Activated CD4-positive, alpha-beta T cell treated with anti-CD3 and anti-CD28 coated beads, Interleukin-2, amount 10 ng/mL, durations not matched to agents 24 days and 14 days (primary cell): ENCODE measurements at regions of chr19 and their contacts with region 1.

Region 1: DNA sequence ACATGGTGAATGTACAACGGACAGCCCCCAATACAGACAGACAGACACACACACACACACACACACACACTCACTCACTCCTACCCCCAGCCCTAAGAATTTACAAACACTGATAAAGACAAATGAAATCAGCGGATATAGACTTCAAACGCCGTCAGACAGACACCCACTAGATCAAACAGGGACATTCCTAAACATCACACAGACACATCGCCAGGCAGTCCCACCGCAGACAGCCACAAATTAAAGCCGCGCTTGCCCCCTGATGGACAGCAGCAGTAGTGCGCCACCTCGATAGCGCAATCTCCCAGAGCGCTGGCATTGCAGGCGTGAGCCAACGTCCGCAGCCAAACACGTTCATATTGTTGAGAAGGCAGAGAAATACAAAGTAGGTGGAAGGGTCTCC is 24.7 kb upstream of the ADGRE1 start:
- DNase-seq: peak; percentile 97
- H3K4me3 Mint-ChIP-seq: peak overlapping the region; percentile 84
- H3K27ac Mint-ChIP-seq: peak overlapping the region; percentile 68
- H3K4me1 Mint-ChIP-seq: peaks cover 17% of the 10 kb centered on the region
- H3K27me3 Mint-ChIP-seq: no peaks in the 10 kb centered on the region

Region 2: DNA sequence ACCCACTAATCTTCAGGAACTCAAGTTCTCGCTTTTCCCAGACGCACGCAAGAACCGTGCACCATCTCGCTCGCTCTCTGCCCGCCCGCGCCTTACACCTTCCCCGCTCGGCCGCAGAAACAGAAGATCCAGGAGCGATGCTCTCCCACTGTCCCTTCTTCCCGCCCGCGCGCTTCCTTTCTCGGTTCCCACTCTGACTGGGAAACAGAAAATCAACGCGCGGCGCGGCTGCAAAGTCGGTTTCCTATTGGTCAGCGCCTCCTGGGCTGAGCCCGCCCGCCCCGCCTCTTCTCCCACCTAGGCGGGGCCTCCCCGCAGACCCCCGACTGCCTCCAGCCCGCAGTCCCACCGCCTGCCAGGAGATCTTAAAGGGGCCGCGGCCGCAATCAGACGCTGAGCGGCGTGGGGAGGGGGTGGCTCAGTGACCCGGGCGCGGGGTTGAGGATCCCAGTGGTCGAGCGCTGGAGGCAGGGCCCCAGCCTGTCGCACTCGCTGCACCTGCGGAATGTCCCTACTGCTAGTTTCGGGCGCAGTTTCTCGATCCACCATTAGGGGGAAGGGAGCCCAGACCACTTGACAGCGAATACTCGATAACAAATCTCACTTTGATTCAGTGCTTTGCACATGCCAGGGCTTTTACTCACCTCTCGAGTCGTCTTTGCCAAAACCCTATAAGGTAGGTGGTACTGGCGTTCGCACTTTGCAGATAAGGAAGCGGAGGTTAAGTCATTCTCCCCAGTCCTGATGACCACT is 402.4 kb before region 1 on chr19:
- intact Hi-C with region 1: loop called (anchors 1 kb)
- DNase-seq: peak; percentile 99
- H3K4me3 Mint-ChIP-seq: peak overlapping the region; percentile 93
- H3K27ac Mint-ChIP-seq: peak overlapping the region; percentile 84
- H3K4me1 Mint-ChIP-seq: peaks cover 17% of the 10 kb centered on the region
- H3K27me3 Mint-ChIP-seq: no peaks in the 10 kb centered on the region

Region 3: GRCh38 chr19:6663236-6664201 is 199.2 kb before region 1 on chr19:
- intact Hi-C with region 1: loop called (anchors 5 kb)
- DNase-seq: no peak
- H3K4me3 Mint-ChIP-seq: peak overlapping the region; percentile 39
- H3K27ac Mint-ChIP-seq: no peak overlapping the region
- H3K4me1 Mint-ChIP-seq: peaks cover 46% of the 10 kb centered on the region
- H3K27me3 Mint-ChIP-seq: no peaks in the 10 kb centered on the region

Region 4: DNA sequence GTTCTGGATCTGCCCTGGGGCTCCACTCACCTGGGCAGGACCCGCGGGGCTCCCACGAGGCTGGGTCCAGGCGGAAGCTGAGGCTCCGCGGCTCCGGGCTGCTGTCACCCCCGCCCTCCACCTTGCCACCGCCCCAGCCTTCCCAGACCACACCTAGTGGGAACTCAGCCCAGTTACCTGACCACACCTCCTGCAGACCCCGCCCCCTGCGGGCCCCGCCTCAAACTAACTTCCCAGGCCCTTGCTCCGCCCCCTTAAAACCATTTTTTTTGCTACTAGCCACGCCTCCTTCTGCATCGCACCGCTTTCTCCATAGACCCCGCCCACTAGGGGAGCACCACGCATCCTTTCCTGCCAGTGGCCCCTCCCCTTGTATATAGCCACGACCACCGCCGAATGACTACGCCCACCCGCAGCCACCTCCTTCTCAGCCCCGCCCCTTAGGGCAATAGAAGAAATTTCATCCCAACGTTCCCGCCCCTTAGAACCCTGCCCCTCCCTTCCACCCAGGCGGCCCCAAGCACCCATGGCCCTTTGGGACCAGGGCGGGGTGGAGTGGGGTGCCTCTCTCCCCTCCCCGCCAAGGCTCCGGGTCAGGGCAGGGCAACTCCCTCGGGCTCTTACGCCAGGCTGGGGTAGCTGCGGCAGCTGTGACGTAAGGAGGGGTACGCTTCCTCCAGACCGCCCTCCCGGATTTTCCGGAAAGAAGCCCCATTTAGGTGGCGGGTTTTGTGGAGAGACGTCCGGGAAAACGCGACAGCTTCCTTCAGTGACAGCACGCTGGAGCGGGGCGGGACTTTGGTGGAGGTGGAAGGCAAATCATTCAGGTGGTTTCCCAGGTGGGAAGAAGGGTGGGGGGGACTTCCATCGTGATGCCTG is 95.1 kb before region 1 on chr19 and contains the start of gene SH2D3A:
- intact Hi-C with region 1: loop called (anchors 1 kb)
- DNase-seq: peak; percentile 98
- H3K4me3 Mint-ChIP-seq: peak within 1 kb of the TSS; percentile 88
- H3K27ac Mint-ChIP-seq: peak within 1 kb of the TSS; percentile 92
- H3K4me1 Mint-ChIP-seq: peaks cover 46% of the 10 kb centered on the region
- H3K27me3 Mint-ChIP-seq: no peaks in the 10 kb centered on the region
- total RNA-seq, gene SH2D3A: 9.8 and 11.0 TPM in 2 replicates

Region 5: DNA sequence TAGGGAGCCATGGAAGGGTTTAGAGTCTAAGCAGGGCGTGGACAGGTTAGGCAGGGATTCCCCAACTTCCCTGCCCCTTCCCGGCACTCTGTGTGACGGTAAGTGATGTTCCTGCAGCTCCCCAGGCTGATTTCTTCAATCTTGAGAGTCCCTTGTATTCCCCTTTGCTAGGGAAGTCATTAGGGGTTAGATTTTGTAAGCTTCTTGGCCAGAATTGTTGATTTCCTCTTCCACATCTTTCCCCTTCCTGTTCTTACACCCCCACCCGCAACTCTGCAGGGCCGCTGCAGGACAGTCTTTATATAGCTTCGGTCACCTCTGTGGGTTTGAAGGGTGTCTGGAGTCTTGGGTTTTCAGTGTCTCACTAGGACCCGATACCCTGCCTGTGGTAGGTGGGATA is 14.1 kb after region 1 on chr19:
- intact Hi-C with region 1: no loop called
- DNase-seq: no peak
- H3K4me3 Mint-ChIP-seq: no peak overlapping the region
- H3K27ac Mint-ChIP-seq: no peak overlapping the region
- H3K4me1 Mint-ChIP-seq: peaks cover 3% of the 10 kb centered on the region
- H3K27me3 Mint-ChIP-seq: peaks cover 9% of the 10 kb centered on the region

Region 6: DNA sequence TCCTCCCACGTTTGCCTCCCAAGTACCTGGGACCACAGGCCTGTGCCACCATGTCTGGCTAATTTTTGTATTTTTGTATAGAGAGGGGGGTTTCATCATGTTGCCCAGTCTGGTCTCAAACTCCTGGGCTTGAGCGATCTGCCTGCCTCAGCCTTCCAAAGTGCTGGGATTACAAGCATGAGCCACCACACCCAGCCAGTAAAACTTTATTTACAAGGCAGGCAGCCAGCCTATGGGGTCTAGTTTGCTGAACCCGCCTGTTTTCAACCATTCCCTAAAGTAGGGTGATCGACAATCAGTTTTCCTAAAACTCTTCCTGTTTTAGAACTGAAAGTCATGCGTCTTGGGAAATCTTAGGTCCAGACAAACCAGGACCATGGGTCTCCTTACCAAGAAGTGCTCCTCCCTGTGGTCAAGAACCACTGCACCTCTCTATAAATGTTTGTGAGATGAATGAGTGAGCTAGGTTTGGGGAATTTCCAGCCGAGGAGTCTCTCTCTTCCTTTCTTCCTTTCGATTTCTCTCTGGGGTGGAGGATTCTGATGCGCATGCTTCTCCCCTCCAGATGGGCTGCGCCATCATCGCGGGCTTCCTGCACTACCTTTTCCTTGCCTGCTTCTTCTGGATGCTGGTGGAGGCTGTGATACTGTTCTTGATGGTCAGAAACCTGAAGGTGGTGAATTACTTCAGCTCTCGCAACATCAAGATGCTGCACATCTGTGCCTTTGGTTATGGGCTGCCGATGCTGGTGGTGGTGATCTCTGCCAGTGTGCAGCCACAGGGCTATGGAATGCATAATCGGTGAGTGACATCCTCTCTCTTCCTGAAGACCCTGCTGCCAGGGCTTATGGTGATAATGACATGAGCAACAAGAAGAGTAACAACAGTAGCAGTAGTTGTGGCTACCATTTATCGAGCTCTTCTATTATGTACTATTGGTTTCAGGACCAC is 63.4 kb after region 1 on chr19:
- intact Hi-C with region 1: loop called (anchors 1 kb)
- DNase-seq: peak; percentile 85
- H3K4me3 Mint-ChIP-seq: peak overlapping the region; percentile 82
- H3K27ac Mint-ChIP-seq: peak overlapping the region; percentile 78
- H3K4me1 Mint-ChIP-seq: peaks cover 7% of the 10 kb centered on the region
- H3K27me3 Mint-ChIP-seq: no peaks in the 10 kb centered on the region

Region 7: DNA sequence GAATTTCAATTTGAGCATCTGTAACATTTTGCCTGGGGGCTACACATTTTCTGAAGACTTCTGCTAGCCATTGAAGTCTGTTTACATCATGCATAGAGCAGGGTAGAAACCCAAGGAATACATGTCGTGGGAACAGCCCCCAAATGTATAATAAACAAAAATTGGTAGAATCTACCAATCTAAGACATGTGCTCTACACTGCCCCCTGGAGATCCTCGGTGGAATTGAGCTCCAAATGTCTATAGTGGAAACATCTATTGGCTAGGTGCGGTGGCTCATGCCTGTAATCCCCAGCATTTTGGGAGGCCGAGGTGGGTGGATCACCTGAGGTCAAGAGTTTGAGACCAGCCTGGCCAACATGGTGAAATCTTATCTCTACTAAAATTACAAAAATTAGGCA is 101.3 kb after region 1 on chr19:
- intact Hi-C with region 1: no loop called
- DNase-seq: peak; percentile 78
- H3K4me3 Mint-ChIP-seq: no peak overlapping the region
- H3K27ac Mint-ChIP-seq: no peak overlapping the region
- H3K4me1 Mint-ChIP-seq: no peaks in the 10 kb centered on the region
- H3K27me3 Mint-ChIP-seq: no peaks in the 10 kb centered on the region